ENCODE measurements at regions of chr3 and their contacts with region 1.

Region 1: GRCh38 chr3:161508863-161509477 is 12.4 kb downstream of the OTOL1 start:
- DNase-seq: peak; percentile 27
- H3K4me3 ChIP-seq: no peak overlapping the region
- H3K27ac ChIP-seq: no peak overlapping the region
- H3K4me1 ChIP-seq: peaks cover 13% of the 10 kb centered on the region
- CTCF ChIP-seq: peak; percentile 80

Region 2: GRCh38 chr3:161489395-161489794 is 19.6 kb before region 1 on chr3:
- CTCF ChIA-PET with region 1: interaction called, 6 read pairs
- POLR2A ChIA-PET with region 1: interaction called, 7 read pairs
- intact Hi-C with region 1: loop called (anchors 2 kb)
- DNase-seq: peak; percentile 31
- H3K4me3 ChIP-seq: no peak overlapping the region
- H3K27ac ChIP-seq: no peak overlapping the region
- H3K4me1 ChIP-seq: peaks cover 5% of the 10 kb centered on the region
- CTCF ChIP-seq: no peak

Region 3: DNA sequence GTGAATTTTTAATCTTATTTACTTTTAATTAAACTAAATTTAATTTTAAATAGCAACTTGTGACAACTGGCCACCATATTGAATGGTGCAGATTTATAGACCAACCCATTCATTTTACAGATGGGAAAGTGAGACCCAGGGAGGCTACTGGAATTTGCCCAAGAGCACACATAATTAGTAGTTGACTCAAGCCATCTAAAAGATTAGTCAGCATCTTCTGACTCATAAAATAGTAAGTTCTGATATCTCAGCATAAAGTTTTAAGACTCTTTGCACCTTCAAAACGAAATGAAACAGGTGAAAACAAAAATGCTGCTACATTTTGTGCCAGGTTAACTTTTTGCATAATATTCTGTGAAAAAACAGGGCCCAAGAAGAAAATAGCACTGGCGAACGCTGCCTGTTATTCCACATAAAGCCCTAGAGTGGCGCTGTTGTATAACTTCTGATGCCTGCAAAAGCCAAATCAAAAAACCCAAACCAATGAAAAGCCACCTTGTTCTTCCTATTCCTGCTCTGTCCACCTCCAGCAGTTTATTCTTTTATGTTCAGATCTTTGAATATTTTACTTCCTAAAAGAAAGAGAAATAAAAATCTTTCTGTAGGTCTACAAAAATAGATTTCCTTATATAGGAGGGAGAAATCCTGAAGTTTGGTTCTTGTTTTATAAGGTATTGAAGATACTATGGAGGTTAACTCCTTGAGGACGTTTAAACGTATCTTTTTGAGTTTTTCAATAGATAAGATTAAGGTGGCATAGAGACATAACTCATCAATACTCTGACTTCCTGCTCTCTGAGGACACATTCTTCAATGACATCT is 50.4 kb after region 1 on chr3:
- CTCF ChIA-PET with region 1: no interaction called
- POLR2A ChIA-PET with region 1: interaction called, 3 read pairs
- intact Hi-C with region 1: loop called (anchors 2 kb)
- DNase-seq: peak; percentile 52
- H3K4me3 ChIP-seq: no peak overlapping the region
- H3K27ac ChIP-seq: no peak overlapping the region
- H3K4me1 ChIP-seq: no peaks in the 10 kb centered on the region
- CTCF ChIP-seq: peak; percentile 93

Region 4: DNA sequence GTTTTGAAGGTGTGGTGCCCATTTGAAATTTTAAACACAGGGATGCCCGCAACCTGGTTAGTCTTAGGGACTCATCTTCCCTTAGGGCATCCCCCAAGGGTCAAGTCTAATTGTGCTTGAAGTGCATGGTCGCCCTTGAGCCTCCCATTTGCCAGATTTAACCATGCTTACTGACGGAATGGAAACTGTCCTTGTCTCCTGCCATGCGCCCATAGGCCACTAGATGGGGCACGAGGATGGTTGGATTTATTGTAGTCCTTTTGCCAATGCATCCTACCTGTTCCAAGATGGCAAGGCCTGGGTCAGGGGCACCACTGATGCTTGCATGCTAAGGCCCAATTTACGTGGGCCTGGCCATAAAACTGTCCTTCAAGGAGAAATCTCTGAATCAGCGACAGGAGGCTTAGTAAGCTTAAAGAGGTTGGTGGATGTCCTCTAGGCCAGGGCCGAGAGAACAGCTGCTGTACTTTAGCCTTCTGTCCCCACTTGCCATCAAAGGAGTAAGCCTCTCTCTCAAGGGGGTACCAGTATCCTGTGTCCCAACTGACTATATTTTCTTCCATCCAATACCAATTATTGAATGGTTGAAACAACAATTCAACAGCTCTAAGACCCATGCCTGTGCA is 343.1 kb after region 1 on chr3:
- CTCF ChIA-PET with region 1: no interaction called
- POLR2A ChIA-PET with region 1: no interaction called
- intact Hi-C with region 1: loop called (anchors 2 kb)
- DNase-seq: peak; percentile 32
- H3K4me3 ChIP-seq: no peak overlapping the region
- H3K27ac ChIP-seq: no peak overlapping the region
- H3K4me1 ChIP-seq: no peaks in the 10 kb centered on the region
- CTCF ChIP-seq: peak; percentile 80

Measured in OCI-LY7 (cell line).